B cell (primary cell): ENCODE measurements at regions of chr2 and their contacts with region 1.

Region 1: GRCh38 chr2:62195421-62196277 is at the start of gene B3GNT2:
- DNase-seq: peak; percentile 90
- ATAC-seq: peak; percentile 81
- H3K4me3 ChIP-seq: peak within 1 kb of the TSS; percentile 68 to 96 (median 93)
- H3K4me3 Mint-ChIP-seq: peak within 1 kb of the TSS; percentile 91
- H3K27ac ChIP-seq: peak within 1 kb of the TSS; percentile 80 to 89
- H3K27ac Mint-ChIP-seq: peak within 1 kb of the TSS; percentile 89
- H3K4me1 ChIP-seq: peaks cover 38 to 44% of the 10 kb centered on the region in 2 donors
- H3K4me1 Mint-ChIP-seq: peaks cover 37% of the 10 kb centered on the region
- H3K27me3 ChIP-seq: no peaks in the 10 kb centered on the region
- H3K27me3 Mint-ChIP-seq: no peaks in the 10 kb centered on the region
- CTCF ChIP-seq: no peak
- total RNA-seq, gene B3GNT2: 14.2 and 14.3 TPM in 2 replicates

Region 2: GRCh38 chr2:61694312-61695274 is 501.1 kb before region 1 on chr2:
- CTCF ChIA-PET with region 1: no interaction called
- POLR2A ChIA-PET with region 1: no interaction called
- intact Hi-C with region 1: loop called (anchors 10 kb)
- DNase-seq: peak; percentile 94
- ATAC-seq: peak; percentile 96
- H3K4me3 ChIP-seq: peak overlapping the region; percentile 50 to 84 (median 79)
- H3K4me3 Mint-ChIP-seq: peak overlapping the region; percentile 94
- H3K27ac ChIP-seq: peak overlapping the region; percentile 54 to 82
- H3K27ac Mint-ChIP-seq: peak overlapping the region; percentile 88
- H3K4me1 ChIP-seq: peaks cover 9 to 17% of the 10 kb centered on the region in 2 donors
- H3K4me1 Mint-ChIP-seq: peaks cover 13% of the 10 kb centered on the region
- H3K27me3 ChIP-seq: no peaks in the 10 kb centered on the region
- H3K27me3 Mint-ChIP-seq: no peaks in the 10 kb centered on the region
- CTCF ChIP-seq: peak; percentile 70

Region 3: DNA sequence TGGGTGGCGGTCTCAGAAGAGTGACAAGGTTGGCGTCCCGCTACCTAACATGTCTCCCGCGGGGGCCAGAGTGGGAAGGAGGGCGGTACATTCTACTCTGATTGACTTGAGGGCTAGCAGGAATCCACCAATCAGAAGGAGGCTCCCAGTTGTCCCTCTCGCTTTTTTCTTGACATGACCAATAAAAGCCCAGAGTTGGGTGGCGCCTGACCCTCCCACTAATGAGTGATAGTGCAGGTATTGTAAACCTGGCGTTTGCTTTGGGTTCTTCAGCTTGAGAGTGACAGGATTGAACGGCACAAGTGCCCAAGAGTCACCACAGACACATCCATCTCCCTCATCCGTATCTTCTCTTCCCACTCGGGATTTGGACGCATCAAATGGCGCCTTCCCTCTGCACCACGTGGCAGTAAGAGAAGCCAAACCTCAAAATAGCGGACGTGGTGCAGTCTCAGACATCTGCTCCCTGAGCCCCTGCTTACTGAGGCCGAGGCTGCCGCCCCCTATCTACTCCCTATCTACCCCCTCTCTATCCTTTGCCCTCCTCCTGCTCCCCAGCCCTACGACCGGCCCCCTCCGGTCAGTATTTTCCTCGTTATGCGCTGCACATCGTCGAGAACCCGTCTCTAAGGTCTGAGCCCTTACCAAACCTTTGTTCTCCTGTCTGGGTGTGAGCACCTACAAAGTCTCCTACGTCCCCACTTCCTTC is 341.0 kb before region 1 on chr2:
- CTCF ChIA-PET with region 1: no interaction called
- POLR2A ChIA-PET with region 1: no interaction called
- intact Hi-C with region 1: loop called (anchors 1 kb)
- DNase-seq: peak; percentile 96
- ATAC-seq: peak; percentile 83
- H3K4me3 ChIP-seq: peak overlapping the region; percentile 92 to 99 (median 98)
- H3K4me3 Mint-ChIP-seq: peak overlapping the region; percentile 94
- H3K27ac ChIP-seq: peak overlapping the region; percentile 56 to 68
- H3K27ac Mint-ChIP-seq: peak overlapping the region; percentile 92
- H3K4me1 ChIP-seq: peaks cover 11 to 16% of the 10 kb centered on the region in 2 donors
- H3K4me1 Mint-ChIP-seq: peaks cover 23% of the 10 kb centered on the region
- H3K27me3 ChIP-seq: no peaks in the 10 kb centered on the region
- H3K27me3 Mint-ChIP-seq: no peaks in the 10 kb centered on the region
- CTCF ChIP-seq: no peak

Region 4: GRCh38 chr2:61970807-61971556 is 224.7 kb before region 1 on chr2:
- CTCF ChIA-PET with region 1: no interaction called
- POLR2A ChIA-PET with region 1: no interaction called
- intact Hi-C with region 1: no loop called
- DNase-seq: no peak
- ATAC-seq: no peak
- H3K4me3 ChIP-seq: no peak overlapping the region
- H3K4me3 Mint-ChIP-seq: no peak overlapping the region
- H3K27ac ChIP-seq: no peak overlapping the region
- H3K27ac Mint-ChIP-seq: no peak overlapping the region
- H3K4me1 ChIP-seq: no peaks in the 10 kb centered on the region
- H3K4me1 Mint-ChIP-seq: no peaks in the 10 kb centered on the region
- H3K27me3 ChIP-seq: no peaks in the 10 kb centered on the region
- H3K27me3 Mint-ChIP-seq: no peaks in the 10 kb centered on the region
- CTCF ChIP-seq: no peak

Region 5: GRCh38 chr2:62038975-62039771 is 156.5 kb before region 1 on chr2:
- CTCF ChIA-PET with region 1: no interaction called
- POLR2A ChIA-PET with region 1: no interaction called
- intact Hi-C with region 1: loop called (anchors 5 kb)
- DNase-seq: peak; percentile 69
- ATAC-seq: peak; percentile 97
- H3K4me3 ChIP-seq: no peak overlapping the region
- H3K4me3 Mint-ChIP-seq: peak overlapping the region; percentile 27
- H3K27ac ChIP-seq: peak overlapping the region in 1 of 2 donors; percentile 18
- H3K27ac Mint-ChIP-seq: peak overlapping the region; percentile 70
- H3K4me1 ChIP-seq: peaks cover 20 to 22% of the 10 kb centered on the region in 2 donors
- H3K4me1 Mint-ChIP-seq: peaks cover 17% of the 10 kb centered on the region
- H3K27me3 ChIP-seq: no peaks in the 10 kb centered on the region
- H3K27me3 Mint-ChIP-seq: no peaks in the 10 kb centered on the region
- CTCF ChIP-seq: no peak

Region 6: GRCh38 chr2:62234755-62235655 is 39.4 kb after region 1 on chr2:
- CTCF ChIA-PET with region 1: no interaction called
- POLR2A ChIA-PET with region 1: no interaction called
- intact Hi-C with region 1: no loop called
- DNase-seq: no peak
- ATAC-seq: no peak
- H3K4me3 ChIP-seq: no peak overlapping the region
- H3K4me3 Mint-ChIP-seq: no peak overlapping the region
- H3K27ac ChIP-seq: no peak overlapping the region
- H3K27ac Mint-ChIP-seq: no peak overlapping the region
- H3K4me1 ChIP-seq: no peaks in the 10 kb centered on the region
- H3K4me1 Mint-ChIP-seq: peaks cover 8% of the 10 kb centered on the region
- H3K27me3 ChIP-seq: no peaks in the 10 kb centered on the region
- H3K27me3 Mint-ChIP-seq: no peaks in the 10 kb centered on the region
- CTCF ChIP-seq: no peak

Region 7: GRCh38 chr2:62313449-62314227 is 118.0 kb after region 1 on chr2:
- CTCF ChIA-PET with region 1: no interaction called
- POLR2A ChIA-PET with region 1: no interaction called
- intact Hi-C with region 1: loop called (anchors 2 kb)
- DNase-seq: peak; percentile 75
- ATAC-seq: peak; percentile 98
- H3K4me3 ChIP-seq: peak overlapping the region in 4 of 5 experiments; percentile 1 to 50 (median 24)
- H3K4me3 Mint-ChIP-seq: peak overlapping the region; percentile 70
- H3K27ac ChIP-seq: peak overlapping the region; percentile 61 to 75
- H3K27ac Mint-ChIP-seq: peak overlapping the region; percentile 85
- H3K4me1 ChIP-seq: peaks cover 55 to 65% of the 10 kb centered on the region in 2 donors
- H3K4me1 Mint-ChIP-seq: peaks cover 61% of the 10 kb centered on the region
- H3K27me3 ChIP-seq: no peaks in the 10 kb centered on the region
- H3K27me3 Mint-ChIP-seq: no peaks in the 10 kb centered on the region
- CTCF ChIP-seq: no peak

Region 8: GRCh38 chr2:62705007-62705829 is 509.6 kb after region 1 on chr2 and contains the start of gene EHBP1:
- CTCF ChIA-PET with region 1: no interaction called
- POLR2A ChIA-PET with region 1: no interaction called
- intact Hi-C with region 1: loop called (anchors 5 kb)
- DNase-seq: peak; percentile 98
- ATAC-seq: peak; percentile 93
- H3K4me3 ChIP-seq: peak within 1 kb of the TSS; percentile 67 to 85 (median 74)
- H3K4me3 Mint-ChIP-seq: peak within 1 kb of the TSS; percentile 93
- H3K27ac ChIP-seq: peak within 1 kb of the TSS; percentile 35 to 47
- H3K27ac Mint-ChIP-seq: peak within 1 kb of the TSS; percentile 80
- H3K4me1 ChIP-seq: peaks cover 20 to 21% of the 10 kb centered on the region in 2 donors
- H3K4me1 Mint-ChIP-seq: peaks cover 33% of the 10 kb centered on the region
- H3K27me3 ChIP-seq: no peaks in the 10 kb centered on the region
- H3K27me3 Mint-ChIP-seq: no peaks in the 10 kb centered on the region
- CTCF ChIP-seq: no peak
- total RNA-seq, gene EHBP1: 34.7 and 36.3 TPM in 2 replicates